T-cell (primary cell): ENCODE measurements at regions of chrX and their contacts with region 1.

Region 1: GRCh38 chrX:44872817-44873414 is at the start of gene KDM6A:
- DNase-seq: peak; percentile 92 to 100 (median 97)
- ATAC-seq: peak; percentile 89 to 92 (median 90)
- H3K4me3 ChIP-seq: peak within 1 kb of the TSS; percentile 86 to 95
- H3K4me3 Mint-ChIP-seq: peak within 1 kb of the TSS; percentile 94 to 98 (median 96)
- H3K27ac ChIP-seq: peak within 1 kb of the TSS; percentile 91
- H3K27ac Mint-ChIP-seq: peak within 1 kb of the TSS; percentile 96 to 98
- H3K4me1 ChIP-seq: peaks cover 4 to 27% of the 10 kb centered on the region in 2 experiments
- H3K4me1 Mint-ChIP-seq: peaks cover 29 to 51% (median 36%) of the 10 kb centered on the region in 3 donors
- H3K27me3 ChIP-seq: no peaks in the 10 kb centered on the region
- H3K27me3 Mint-ChIP-seq: no peaks in the 10 kb centered on the region
- total RNA-seq, gene KDM6A: 37.1 to 97.3 (median 55.7) TPM

Region 2: GRCh38 chrX:44848231-44848630 is 24.7 kb before region 1 on chrX:
- CTCF ChIA-PET with region 1: no interaction called
- POLR2A ChIA-PET with region 1: no interaction called
- DNase-seq: no peak
- ATAC-seq: no peak
- H3K4me3 ChIP-seq: no peak overlapping the region
- H3K4me3 Mint-ChIP-seq: no peak overlapping the region
- H3K27ac ChIP-seq: no peak overlapping the region
- H3K27ac Mint-ChIP-seq: no peak overlapping the region
- H3K4me1 ChIP-seq: no peaks in the 10 kb centered on the region
- H3K4me1 Mint-ChIP-seq: no peaks in the 10 kb centered on the region
- H3K27me3 ChIP-seq: no peaks in the 10 kb centered on the region
- H3K27me3 Mint-ChIP-seq: no peaks in the 10 kb centered on the region

Region 3: DNA sequence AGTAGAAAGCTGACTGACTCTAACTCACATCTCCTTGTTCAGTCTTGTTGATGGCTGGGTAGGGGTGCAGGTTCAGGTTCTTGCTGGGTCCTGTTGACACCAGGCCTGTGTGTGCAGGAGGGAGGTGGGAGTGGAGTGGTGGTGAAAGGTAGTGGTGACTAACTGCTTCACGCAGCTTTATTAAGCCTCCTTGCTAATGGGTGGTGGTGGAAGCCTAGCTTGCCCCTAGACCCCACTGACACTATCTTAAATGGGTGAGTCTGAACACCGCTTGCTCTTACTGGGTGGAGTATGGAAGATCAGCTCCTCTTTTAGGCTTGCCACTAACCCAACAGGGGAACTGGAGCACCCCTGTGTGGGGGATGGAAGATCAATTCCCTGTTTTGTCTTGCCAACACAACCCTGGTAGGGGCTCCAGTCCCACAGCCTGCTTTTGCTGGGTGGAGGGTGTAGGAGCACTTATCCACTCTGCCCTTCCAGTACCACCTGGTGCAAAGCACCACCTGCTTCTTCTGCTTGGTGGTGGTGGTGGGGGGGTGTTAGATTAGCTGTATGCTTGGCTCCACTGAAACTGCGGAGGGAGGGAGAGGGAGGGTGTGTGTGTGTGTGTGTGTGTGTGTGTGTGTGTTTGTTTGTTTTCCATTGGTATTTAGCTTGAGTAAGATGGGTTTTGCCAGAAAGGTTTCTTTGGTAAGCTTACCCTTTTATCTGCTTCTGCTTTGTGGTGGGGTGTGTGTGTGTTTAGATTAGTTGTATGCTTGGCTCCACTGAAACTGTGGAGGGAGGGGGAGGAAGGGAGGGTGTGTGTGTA is 25.7 kb after region 1 on chrX:
- CTCF ChIA-PET with region 1: interaction called in 1 of 2 experiments, 6 read pairs
- POLR2A ChIA-PET with region 1: interaction called, 4 to 27 read pairs
- DNase-seq: no peak
- ATAC-seq: peak in 3 of 4 experiments; percentile 20 to 72 (median 35)
- H3K4me3 ChIP-seq: no peak overlapping the region
- H3K4me3 Mint-ChIP-seq: peak overlapping the region; percentile 24 to 60 (median 31)
- H3K27ac ChIP-seq: no peak overlapping the region
- H3K27ac Mint-ChIP-seq: peak overlapping the region in 1 of 2 donors; percentile 8
- H3K4me1 ChIP-seq: peaks cover 13 to 17% of the 10 kb centered on the region in 2 experiments
- H3K4me1 Mint-ChIP-seq: peaks cover 54 to 57% (median 56%) of the 10 kb centered on the region in 3 donors
- H3K27me3 ChIP-seq: no peaks in the 10 kb centered on the region
- H3K27me3 Mint-ChIP-seq: no peaks in the 10 kb centered on the region

Region 4: DNA sequence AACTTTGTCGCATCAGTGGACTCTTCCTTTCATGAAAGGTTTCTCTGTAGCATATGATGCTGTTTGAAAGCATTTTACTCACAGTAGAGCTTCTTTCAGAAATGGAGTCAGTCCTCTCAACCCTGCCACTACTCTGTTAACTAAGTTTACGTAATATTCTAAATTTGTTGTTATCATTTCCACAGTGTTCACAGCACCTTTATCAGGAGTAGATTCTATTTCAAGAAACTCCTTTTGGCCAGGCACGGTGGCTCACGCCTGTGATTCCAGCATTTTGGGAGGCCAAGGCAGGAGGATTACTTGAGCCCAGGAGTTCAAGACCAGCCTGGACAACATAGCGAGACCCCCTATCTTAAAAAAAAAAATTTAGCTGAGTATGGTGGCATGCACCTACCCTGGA is 90.0 kb after region 1 on chrX:
- CTCF ChIA-PET with region 1: no interaction called
- POLR2A ChIA-PET with region 1: interaction called in 1 of 2 experiments, 12 read pairs
- DNase-seq: no peak
- ATAC-seq: no peak
- H3K4me3 ChIP-seq: no peak overlapping the region
- H3K4me3 Mint-ChIP-seq: no peak overlapping the region
- H3K27ac ChIP-seq: no peak overlapping the region
- H3K27ac Mint-ChIP-seq: no peak overlapping the region
- H3K4me1 ChIP-seq: peaks cover 0 to 18% of the 10 kb centered on the region in 2 experiments
- H3K4me1 Mint-ChIP-seq: peaks cover 74 to 82% (median 77%) of the 10 kb centered on the region in 3 donors
- H3K27me3 ChIP-seq: no peaks in the 10 kb centered on the region
- H3K27me3 Mint-ChIP-seq: no peaks in the 10 kb centered on the region

Region 5: DNA sequence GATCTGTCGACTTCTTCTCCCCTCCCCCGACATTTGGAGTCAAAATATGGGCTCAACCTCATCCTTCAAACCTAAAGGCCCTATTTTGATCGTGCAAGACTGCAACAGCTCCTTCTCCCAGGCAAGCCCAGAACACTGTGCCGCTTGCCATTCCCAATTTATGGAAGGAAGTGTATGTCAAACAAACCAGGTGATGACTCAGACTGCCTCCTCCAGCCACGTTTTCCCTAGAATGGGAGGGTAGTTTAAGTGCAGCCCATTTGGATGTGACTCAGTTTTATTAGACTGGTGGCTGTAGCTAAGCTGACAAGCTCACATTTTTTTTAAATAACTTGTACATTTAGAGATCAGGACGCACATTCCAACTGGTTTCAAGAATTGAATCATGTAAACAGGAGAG is 898.2 kb after region 1 on chrX:
- CTCF ChIA-PET with region 1: no interaction called
- POLR2A ChIA-PET with region 1: interaction called in 1 of 2 experiments, 12 read pairs
- DNase-seq: peak in 1 of 35 experiments; percentile 19
- ATAC-seq: no peak
- H3K4me3 ChIP-seq: peak overlapping the region in 1 of 2 donors; percentile 26
- H3K4me3 Mint-ChIP-seq: peak overlapping the region; percentile 67 to 79 (median 76)
- H3K27ac ChIP-seq: peak overlapping the region; percentile 91
- H3K27ac Mint-ChIP-seq: peak overlapping the region; percentile 93 to 97
- H3K4me1 ChIP-seq: peaks cover 4 to 14% of the 10 kb centered on the region in 2 experiments
- H3K4me1 Mint-ChIP-seq: peaks cover 32 to 54% (median 45%) of the 10 kb centered on the region in 3 donors
- H3K27me3 ChIP-seq: no peaks in the 10 kb centered on the region
- H3K27me3 Mint-ChIP-seq: no peaks in the 10 kb centered on the region